ENCODE measurements at regions of chr15 and their contacts with region 1.

Region 1: DNA sequence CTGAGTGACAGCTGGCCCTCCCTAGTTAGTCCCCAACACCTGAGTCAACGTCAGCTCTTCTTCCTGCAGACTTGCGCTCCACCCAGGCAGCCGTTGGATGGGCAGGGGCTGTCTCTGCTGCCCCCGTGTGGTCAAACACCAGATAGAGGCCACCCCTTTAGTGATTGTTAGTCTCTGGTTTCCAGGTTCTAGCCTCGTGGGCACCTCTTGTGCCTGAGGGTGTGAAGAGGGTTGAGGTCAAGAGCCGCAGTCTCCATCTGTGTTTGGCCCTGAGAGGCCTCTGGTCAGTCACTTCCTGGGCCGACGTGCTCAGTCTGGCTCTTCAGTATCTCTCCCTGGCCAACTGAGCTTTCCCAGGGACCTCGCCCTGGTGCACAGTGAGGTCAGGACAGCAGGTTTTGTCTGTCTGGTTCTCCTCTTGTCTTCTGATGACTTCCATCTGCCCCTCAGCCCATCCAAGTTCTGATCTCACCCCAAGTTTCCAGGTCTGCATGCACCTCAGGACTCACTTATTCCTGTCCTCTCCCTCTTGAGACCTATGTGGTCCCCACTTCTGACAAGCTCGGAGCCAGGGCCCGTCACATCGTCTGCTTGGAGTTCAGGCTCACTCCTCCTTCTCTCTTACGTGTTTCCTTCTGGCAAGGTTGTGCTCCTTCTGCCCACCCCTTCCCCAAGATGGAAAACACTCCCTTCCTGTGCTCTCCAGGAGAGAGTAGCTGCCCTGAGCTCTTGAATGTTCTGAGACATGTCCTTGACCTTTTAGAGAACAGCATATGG is 20.9 kb downstream of the CD276 start:
- DNase-seq: peak; percentile 66 to 86
- ATAC-seq: peak; percentile 58
- H3K4me3 ChIP-seq: no peak overlapping the region
- H3K27ac ChIP-seq: no peak overlapping the region
- H3K4me1 ChIP-seq: no peaks in the 10 kb centered on the region
- H3K27me3 ChIP-seq: no peaks in the 10 kb centered on the region

Region 2: GRCh38 chr15:73584699-73585420 is 120.2 kb before region 1 on chr15:
- intact Hi-C with region 1: no loop called
- DNase-seq: no peak
- ATAC-seq: no peak
- H3K4me3 ChIP-seq: no peak overlapping the region
- H3K27ac ChIP-seq: no peak overlapping the region
- H3K4me1 ChIP-seq: no peaks in the 10 kb centered on the region
- H3K27me3 ChIP-seq: no peaks in the 10 kb centered on the region

Region 3: DNA sequence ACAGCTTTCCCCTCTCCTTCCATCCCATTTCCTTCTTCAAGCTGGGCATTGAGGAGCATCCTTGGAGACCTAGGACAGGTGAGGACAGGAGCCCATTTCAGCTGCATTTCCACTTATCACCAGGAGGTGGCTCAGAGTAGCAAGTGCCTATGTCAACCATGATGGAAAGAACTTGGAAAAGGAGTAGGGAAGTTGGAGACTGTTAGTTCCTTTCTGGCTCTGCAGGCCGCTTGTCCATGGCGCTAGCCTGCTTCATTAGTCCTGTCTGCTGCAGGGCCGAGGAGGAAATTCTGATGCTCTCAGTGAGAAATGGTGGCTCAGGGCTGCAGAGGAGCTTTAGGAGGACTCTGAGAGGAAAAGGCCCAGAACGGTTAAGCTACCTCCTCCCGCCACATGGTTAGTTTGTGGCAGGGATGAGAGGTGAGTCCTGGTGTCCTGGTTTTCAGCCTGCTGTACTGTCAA is 27.9 kb before region 1 on chr15:
- intact Hi-C with region 1: loop called (anchors 1 to 5 kb)
- DNase-seq: peak in 1 of 2 donors; percentile 74
- ATAC-seq: peak; percentile 92
- H3K4me3 ChIP-seq: no peak overlapping the region
- H3K27ac ChIP-seq: no peak overlapping the region
- H3K4me1 ChIP-seq: no peaks in the 10 kb centered on the region
- H3K27me3 ChIP-seq: peaks cover 0 to 2% of the 10 kb centered on the region in 2 donors

Region 4: GRCh38 chr15:74146277-74146800 is 441.3 kb after region 1 on chr15:
- intact Hi-C with region 1: no loop called
- DNase-seq: no peak
- ATAC-seq: no peak
- H3K4me3 ChIP-seq: no peak overlapping the region
- H3K27ac ChIP-seq: no peak overlapping the region
- H3K4me1 ChIP-seq: no peaks in the 10 kb centered on the region
- H3K27me3 ChIP-seq: no peaks in the 10 kb centered on the region